ENCODE measurements at regions of chr13 and their contacts with region 1.

Region 1: GRCh38 chr13:29746148-29746677 is 104.2 kb downstream of the UBL3 start:
- DNase-seq: no peak
- H3K4me3 ChIP-seq: no peak overlapping the region
- H3K27ac ChIP-seq: no peak overlapping the region
- H3K4me1 ChIP-seq: no peaks in the 10 kb centered on the region
- H3K27me3 ChIP-seq: no peaks in the 10 kb centered on the region
- CTCF ChIP-seq: no peak
- EP300 ChIP-seq: no peak
- POLR2A ChIP-seq: no peak
- RAD21 ChIP-seq: no peak

Region 2: GRCh38 chr13:29640665-29641064 is 105.5 kb before region 1 on chr13:
- CTCF ChIA-PET with region 1: no interaction called
- POLR2A ChIA-PET with region 1: no interaction called
- DNase-seq: no peak
- H3K4me3 ChIP-seq: no peak overlapping the region
- H3K27ac ChIP-seq: no peak overlapping the region
- H3K4me1 ChIP-seq: no peaks in the 10 kb centered on the region
- H3K27me3 ChIP-seq: no peaks in the 10 kb centered on the region
- CTCF ChIP-seq: no peak
- EP300 ChIP-seq: no peak
- POLR2A ChIP-seq: no peak
- RAD21 ChIP-seq: no peak

Region 3: GRCh38 chr13:29730253-29730652 is 16.0 kb before region 1 on chr13:
- CTCF ChIA-PET with region 1: interaction called, 12 read pairs
- POLR2A ChIA-PET with region 1: no interaction called
- DNase-seq: no peak
- H3K4me3 ChIP-seq: no peak overlapping the region
- H3K27ac ChIP-seq: no peak overlapping the region
- H3K4me1 ChIP-seq: no peaks in the 10 kb centered on the region
- H3K27me3 ChIP-seq: no peaks in the 10 kb centered on the region; a peak in 1 of 7 replicates
- CTCF ChIP-seq: peak in 2 of 3 experiments; percentile 5 to 33; a peak in 2 of 4 replicates
- EP300 ChIP-seq: no peak
- POLR2A ChIP-seq: no peak
- RAD21 ChIP-seq: peak in 1 of 2 experiments; percentile 2; a peak in 1 of 4 replicates

Region 4: DNA sequence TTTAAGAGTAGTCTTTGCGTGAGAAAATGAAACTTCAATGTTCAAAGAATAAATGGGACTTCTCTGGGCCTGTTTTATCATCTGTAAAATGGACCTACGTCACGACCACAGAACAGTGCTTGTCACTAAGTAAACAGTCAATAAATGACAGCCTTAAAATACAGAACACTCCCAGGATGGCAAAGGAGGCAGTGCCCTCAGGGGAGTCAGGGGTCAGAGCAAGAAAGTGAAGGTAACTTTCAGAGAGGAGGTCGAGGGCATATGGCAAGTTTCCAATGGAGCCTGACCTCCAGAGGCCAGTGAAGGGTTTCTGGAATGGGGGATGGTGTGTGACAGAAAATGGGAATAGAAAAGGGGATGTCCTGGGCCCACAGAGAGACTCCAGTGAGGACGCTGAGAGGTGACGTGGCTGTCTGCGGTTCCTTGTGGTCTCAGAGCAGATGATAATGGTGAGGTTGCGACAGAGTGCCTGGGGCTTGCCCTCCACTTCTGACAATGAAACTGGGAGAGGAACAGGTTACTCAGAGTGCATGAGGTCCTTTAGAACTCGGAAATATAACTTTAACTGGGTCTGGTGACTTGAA is 12.4 kb after region 1 on chr13:
- CTCF ChIA-PET with region 1: no interaction called
- POLR2A ChIA-PET with region 1: no interaction called
- DNase-seq: no peak
- H3K4me3 ChIP-seq: no peak overlapping the region
- H3K27ac ChIP-seq: no peak overlapping the region
- H3K4me1 ChIP-seq: peaks cover 2 to 7% (median 4%) of the 10 kb centered on the region in 4 experiments; a peak in 5 of 7 replicates
- H3K27me3 ChIP-seq: no peaks in the 10 kb centered on the region
- CTCF ChIP-seq: no peak
- EP300 ChIP-seq: no peak
- POLR2A ChIP-seq: no peak
- RAD21 ChIP-seq: no peak